ENCODE measurements at regions of chr10 and their contacts with region 1.

Region 1: GRCh38 chr10:50396491-50397311 is 145.4 kb upstream of the ASAH2 start:
- DNase-seq: no peak
- ATAC-seq: peak; percentile 92
- H3K4me3 ChIP-seq: peak overlapping the region; percentile 4; the same call in 1 of the 2 replicates
- H3K27ac ChIP-seq: peak overlapping the region; percentile 65
- H3K4me1 ChIP-seq: peaks cover 17% of the 10 kb centered on the region
- H3K27me3 ChIP-seq: no peaks in the 10 kb centered on the region
- CTCF ChIP-seq: no peak
- EP300 ChIP-seq: 0 out of 4 replicates have a peak, but pooled peaks of 1 of the 2 experiments have one; percentile 16
- POLR2A ChIP-seq: no peak
- RAD21 ChIP-seq: no peak

Region 2: DNA sequence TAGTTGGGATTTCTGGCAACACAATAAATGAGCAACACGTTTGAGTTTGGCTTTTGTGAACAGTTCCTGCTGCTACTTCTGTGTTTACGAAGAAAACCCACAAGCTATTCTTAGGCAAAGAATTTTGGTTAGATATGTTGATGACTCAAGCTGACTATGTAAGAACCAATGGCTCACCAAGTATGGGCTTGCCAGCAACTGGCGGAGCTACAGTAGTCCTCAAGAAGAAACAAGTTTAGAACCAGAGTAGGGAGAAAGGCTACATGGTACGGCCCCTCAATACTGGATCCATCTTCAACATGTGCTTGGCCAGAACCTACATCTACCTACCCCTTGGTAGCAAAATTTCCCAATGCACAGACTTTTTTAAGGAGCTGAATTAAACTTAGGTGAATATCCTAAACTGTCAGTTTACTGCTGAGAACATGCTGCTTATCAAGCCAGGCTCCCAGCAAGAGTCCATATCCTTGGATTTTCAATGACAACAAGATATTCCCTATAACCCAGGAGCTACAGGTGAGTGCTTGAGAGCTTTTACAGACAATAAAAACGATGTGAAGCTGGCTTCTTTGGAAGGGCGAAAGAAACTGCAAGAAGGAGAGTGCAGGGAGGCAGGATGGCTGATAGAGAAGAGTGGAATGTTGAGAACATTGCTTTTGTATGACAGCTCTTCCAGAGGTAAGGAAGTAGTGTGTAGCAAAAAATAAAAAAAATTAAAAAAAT is 71.1 kb before region 1 on chr10:
- CTCF ChIA-PET with region 1: interaction called, 4 read pairs
- POLR2A ChIA-PET with region 1: no interaction called
- RAD21 ChIA-PET with region 1: interaction called, 3 read pairs
- SMC1A ChIA-PET with region 1: interaction called, 10 read pairs
- in situ Hi-C with region 1: no loop called
- intact Hi-C with region 1: no loop called
- DNase-seq: no peak
- ATAC-seq: peak; percentile 76
- H3K4me3 ChIP-seq: no peak overlapping the region
- H3K27ac ChIP-seq: peak overlapping the region; percentile 38; the same call in 1 of the 2 replicates
- H3K4me1 ChIP-seq: peaks cover 17% of the 10 kb centered on the region
- H3K27me3 ChIP-seq: no peaks in the 10 kb centered on the region
- CTCF ChIP-seq: no peak
- EP300 ChIP-seq: no peak
- POLR2A ChIP-seq: no peak
- RAD21 ChIP-seq: no peak

Region 3: GRCh38 chr10:50367732-50368131 is 29.0 kb before region 1 on chr10:
- CTCF ChIA-PET with region 1: interaction called, 3 read pairs
- POLR2A ChIA-PET with region 1: no interaction called
- RAD21 ChIA-PET with region 1: interaction called, 4 read pairs
- SMC1A ChIA-PET with region 1: interaction called, 14 read pairs
- in situ Hi-C with region 1: no loop called
- intact Hi-C with region 1: no loop called
- DNase-seq: no peak
- ATAC-seq: peak; percentile 62
- H3K4me3 ChIP-seq: no peak overlapping the region
- H3K27ac ChIP-seq: no peak overlapping the region
- H3K4me1 ChIP-seq: peaks cover 17% of the 10 kb centered on the region
- H3K27me3 ChIP-seq: no peaks in the 10 kb centered on the region
- CTCF ChIP-seq: peak; percentile 29 to 43 (median 30); a peak in 4 of 6 replicates
- EP300 ChIP-seq: no peak
- POLR2A ChIP-seq: no peak
- RAD21 ChIP-seq: peak; percentile 49

Region 4: GRCh38 chr10:50431791-50432190 is 35.1 kb after region 1 on chr10:
- CTCF ChIA-PET with region 1: no interaction called
- POLR2A ChIA-PET with region 1: no interaction called
- RAD21 ChIA-PET with region 1: no interaction called
- SMC1A ChIA-PET with region 1: interaction called, 5 read pairs
- in situ Hi-C with region 1: no loop called
- intact Hi-C with region 1: loop called (anchors 2 kb)
- DNase-seq: peak; percentile 96
- ATAC-seq: peak; percentile 89
- H3K4me3 ChIP-seq: peak overlapping the region; percentile 45; the same call in 1 of the 2 replicates
- H3K27ac ChIP-seq: peak overlapping the region; percentile 80; the same call in 1 of the 2 replicates
- H3K4me1 ChIP-seq: peaks cover 25% of the 10 kb centered on the region
- H3K27me3 ChIP-seq: no peaks in the 10 kb centered on the region
- CTCF ChIP-seq: no peak
- EP300 ChIP-seq: peak; percentile 99
- POLR2A ChIP-seq: no peak
- RAD21 ChIP-seq: no peak; the same call in 1 of the 2 replicates

Measured in GM12878 (cell line).